Dendritic cell treated with granulocyte-macrophage colony-stimulating factor and Interleukin-4, amounts not matched to agents 40 ng/mL and 50 ng/mL, for 4 days (primary cell): ENCODE measurements at regions of chr5 and their contacts with region 1.

Region 1: DNA sequence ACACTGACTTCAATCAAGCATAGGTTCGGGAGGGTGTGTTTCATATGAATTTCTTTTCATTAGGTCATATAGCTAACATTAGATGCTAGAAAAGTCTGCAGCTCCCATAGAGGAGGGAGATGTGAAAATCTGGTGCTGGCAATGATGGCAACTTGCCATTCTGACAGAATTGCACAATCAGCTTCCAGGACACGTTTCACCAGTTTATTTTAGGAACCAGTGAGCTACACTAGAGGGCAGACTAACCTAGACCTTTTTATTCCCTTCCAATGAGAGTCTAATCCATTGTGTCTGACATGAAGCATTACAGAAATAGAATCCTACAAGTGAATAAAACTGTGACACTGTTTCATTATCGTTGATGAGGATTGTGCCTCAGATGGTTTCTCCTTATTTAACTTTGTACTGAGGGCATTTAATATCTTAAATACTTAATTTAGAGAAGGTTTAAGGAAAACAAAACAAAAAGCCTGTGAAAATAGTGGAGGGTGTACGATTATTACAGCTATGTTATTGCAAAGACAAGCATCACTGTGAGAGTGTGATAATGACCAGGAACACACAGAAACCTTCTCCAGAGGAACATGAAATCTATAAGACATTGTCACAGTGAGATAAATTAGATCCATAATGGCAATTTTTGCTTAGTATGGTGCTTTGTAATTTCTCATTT is 363.3 kb upstream of the RPS23 start:
- H3K4me3 Mint-ChIP-seq: no peak overlapping the region
- H3K27ac Mint-ChIP-seq: no peak overlapping the region
- H3K4me1 Mint-ChIP-seq: peaks cover 7% of the 10 kb centered on the region
- H3K27me3 Mint-ChIP-seq: no peaks in the 10 kb centered on the region

Region 2: DNA sequence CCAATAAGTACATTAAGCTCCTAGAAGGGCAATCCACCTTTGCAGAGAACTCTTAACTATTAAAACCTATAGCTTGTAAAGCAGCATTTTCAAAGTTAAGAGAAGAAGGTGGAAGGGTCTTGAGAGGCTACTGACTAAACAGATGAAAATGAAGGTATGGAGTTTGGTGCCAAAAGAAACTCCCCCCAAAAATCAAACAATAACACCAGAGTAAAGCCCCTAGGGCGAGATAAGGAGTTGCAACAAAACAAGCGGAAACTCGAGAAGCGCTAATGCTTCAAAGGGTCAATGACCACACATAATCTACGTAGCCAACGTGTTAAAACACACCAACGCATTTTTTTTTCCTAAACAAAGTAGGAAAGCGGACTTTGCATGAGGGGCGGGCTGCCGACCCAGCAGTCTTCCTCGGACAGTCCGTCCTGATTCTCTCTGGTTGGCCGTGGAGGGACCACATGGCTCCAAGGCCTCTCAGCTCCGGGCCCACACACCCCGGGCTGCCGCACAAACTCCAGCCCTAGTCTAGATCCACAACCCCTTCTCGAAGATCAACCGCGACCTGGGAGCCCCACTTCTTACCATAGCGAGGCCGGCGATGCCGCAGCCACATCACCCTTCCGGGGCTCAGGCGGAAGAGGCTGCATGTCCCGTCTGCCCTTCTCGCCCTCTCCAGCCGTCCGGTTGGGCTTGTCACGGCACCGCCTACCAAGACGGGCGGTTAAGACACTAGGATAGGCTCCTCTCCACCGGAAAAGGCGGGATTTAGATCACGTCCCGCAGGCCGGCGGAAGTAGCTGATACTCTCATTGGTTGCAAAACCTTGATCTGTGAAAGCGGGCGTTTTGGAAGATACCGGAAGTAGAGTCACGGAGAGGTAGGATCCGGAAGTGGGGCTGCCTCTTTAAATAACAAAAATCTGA is 435.5 kb after region 1 on chr5 and contains the starts of genes TMEM167A and XRCC4:
- intact Hi-C with region 1: loop called (anchors 10 kb)
- H3K4me3 Mint-ChIP-seq: peak within 1 kb of the TSS; percentile 97
- H3K27ac Mint-ChIP-seq: peak within 1 kb of the TSS; percentile 98
- H3K4me1 Mint-ChIP-seq: peaks cover 50% of the 10 kb centered on the region
- H3K27me3 Mint-ChIP-seq: no peaks in the 10 kb centered on the region

Region 3: DNA sequence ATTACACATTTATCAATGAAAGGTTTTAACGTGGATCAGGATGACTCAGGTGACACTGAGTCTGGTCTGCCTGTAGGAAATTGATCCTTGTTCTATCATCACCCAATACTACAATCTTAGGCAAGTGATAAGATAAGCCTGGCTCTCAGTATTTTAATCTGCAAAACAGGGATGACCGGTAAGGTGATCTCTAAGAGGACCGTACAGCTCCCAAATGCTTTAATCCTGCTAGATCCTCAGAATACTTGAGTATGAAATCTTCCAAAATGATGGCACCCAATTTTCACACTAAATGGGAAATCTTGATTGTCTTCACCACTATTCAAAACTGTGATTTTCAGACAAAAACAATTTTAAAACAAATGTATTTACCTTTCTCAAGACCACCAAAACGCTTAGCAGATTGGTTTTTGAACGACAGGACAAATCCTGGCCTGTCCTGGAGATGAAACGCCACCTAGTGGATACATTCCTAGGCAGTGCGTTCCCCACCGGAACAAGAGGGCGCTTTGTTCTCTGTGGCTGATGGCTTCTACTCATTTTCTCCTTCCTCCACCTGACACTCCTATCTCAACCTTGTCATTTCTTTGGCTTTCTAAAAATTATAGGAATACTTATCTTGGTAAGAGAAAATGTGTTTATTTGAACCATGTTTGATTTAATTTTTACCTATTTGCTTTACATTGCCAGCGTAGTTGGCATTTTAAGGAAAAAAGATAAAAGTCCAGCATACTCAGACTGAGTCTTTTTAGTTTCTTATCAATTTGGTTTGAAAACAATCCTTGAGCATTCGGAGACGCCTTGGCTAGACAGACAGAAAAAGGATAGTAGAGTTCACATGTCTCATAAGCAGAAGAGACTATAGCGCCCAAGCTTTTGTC is 788.9 kb after region 1 on chr5:
- intact Hi-C with region 1: loop called (anchors 2 kb)
- H3K4me3 Mint-ChIP-seq: no peak overlapping the region
- H3K27ac Mint-ChIP-seq: no peak overlapping the region
- H3K4me1 Mint-ChIP-seq: peaks cover 19% of the 10 kb centered on the region
- H3K27me3 Mint-ChIP-seq: no peaks in the 10 kb centered on the region